ENCODE measurements at regions of chr1 and their contacts with region 1.

Region 1: DNA sequence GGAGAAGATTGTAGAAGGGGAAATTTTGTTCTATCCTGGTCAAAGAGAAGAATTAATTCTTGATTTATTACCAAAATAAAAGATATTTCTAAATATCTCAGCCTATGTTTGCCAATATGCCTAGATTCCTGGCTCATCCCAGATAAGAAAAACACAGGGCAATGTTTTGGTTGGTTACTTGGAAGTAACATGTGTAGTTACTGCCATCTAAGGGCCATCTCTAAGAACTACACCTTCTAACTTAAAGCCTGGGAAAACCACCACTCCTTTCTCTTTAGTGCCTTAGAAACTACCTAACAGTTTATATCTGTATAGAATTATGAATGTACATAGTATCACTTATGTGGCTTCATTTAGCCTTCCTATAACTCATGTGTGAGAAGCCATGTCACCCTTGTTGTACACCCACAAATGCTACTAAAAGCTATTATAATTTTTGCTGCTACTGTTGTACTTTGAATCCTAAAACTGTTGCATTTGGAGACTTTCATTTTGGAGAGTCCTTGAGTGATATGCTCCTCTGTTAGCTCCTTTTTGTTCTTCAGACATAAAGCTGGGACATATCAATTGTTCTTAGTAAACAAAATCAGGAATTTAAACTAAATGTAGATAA is 4.5 kb downstream of the AIM2 start:
- DNase-seq: no peak
- ATAC-seq: peak; percentile 1; the same call in 2 of the 3 replicates
- H3K4me3 ChIP-seq: peak overlapping the region; percentile 13; the same call in 1 of the 2 replicates
- H3K27ac ChIP-seq: peak overlapping the region; percentile 20; the same call in 1 of the 2 replicates
- H3K4me1 ChIP-seq: peaks cover 35% of the 10 kb centered on the region
- H3K27me3 ChIP-seq: no peaks in the 10 kb centered on the region
- CTCF ChIP-seq: peak; percentile 61 to 78 (median 62)
- EP300 ChIP-seq: no peak
- POLR2A ChIP-seq: no peak
- RAD21 ChIP-seq: peak; percentile 74

Region 2: GRCh38 chr1:158285756-158286241 is 786.3 kb before region 1 on chr1:
- CTCF ChIA-PET with region 1: interaction called, 4 read pairs
- POLR2A ChIA-PET with region 1: interaction called, 3 read pairs
- RAD21 ChIA-PET with region 1: interaction called, 5 read pairs
- SMC1A ChIA-PET with region 1: interaction called, 4 read pairs
- in situ Hi-C with region 1: loop called (anchors 10 kb)
- intact Hi-C with region 1: loop called (anchors 2 kb)
- DNase-seq: peak; percentile 79
- ATAC-seq: peak; percentile 75
- H3K4me3 ChIP-seq: no peak overlapping the region
- H3K27ac ChIP-seq: peak overlapping the region; percentile 88
- H3K4me1 ChIP-seq: peaks cover 57% of the 10 kb centered on the region
- H3K27me3 ChIP-seq: no peaks in the 10 kb centered on the region
- CTCF ChIP-seq: no peak
- EP300 ChIP-seq: peak; percentile 51 to 60; a peak in 1 of 4 replicates
- POLR2A ChIP-seq: peak; percentile 31; the same call in 1 of the 2 replicates
- RAD21 ChIP-seq: no peak

Region 3: GRCh38 chr1:158781104-158781503 is 291.0 kb before region 1 on chr1 and contains the start of gene OR6N2:
- CTCF ChIA-PET with region 1: no interaction called
- POLR2A ChIA-PET with region 1: no interaction called
- RAD21 ChIA-PET with region 1: no interaction called
- SMC1A ChIA-PET with region 1: no interaction called
- in situ Hi-C with region 1: no loop called
- intact Hi-C with region 1: no loop called
- DNase-seq: no peak
- ATAC-seq: no peak
- H3K4me3 ChIP-seq: no peak within 1 kb of the TSS
- H3K27ac ChIP-seq: no peak within 1 kb of the TSS
- H3K4me1 ChIP-seq: no peaks in the 10 kb centered on the region
- H3K27me3 ChIP-seq: no peaks in the 10 kb centered on the region
- CTCF ChIP-seq: no peak
- EP300 ChIP-seq: no peak
- POLR2A ChIP-seq: no peak
- RAD21 ChIP-seq: no peak
- polyA plus RNA-seq, gene OR6N2: not detected

Region 4: DNA sequence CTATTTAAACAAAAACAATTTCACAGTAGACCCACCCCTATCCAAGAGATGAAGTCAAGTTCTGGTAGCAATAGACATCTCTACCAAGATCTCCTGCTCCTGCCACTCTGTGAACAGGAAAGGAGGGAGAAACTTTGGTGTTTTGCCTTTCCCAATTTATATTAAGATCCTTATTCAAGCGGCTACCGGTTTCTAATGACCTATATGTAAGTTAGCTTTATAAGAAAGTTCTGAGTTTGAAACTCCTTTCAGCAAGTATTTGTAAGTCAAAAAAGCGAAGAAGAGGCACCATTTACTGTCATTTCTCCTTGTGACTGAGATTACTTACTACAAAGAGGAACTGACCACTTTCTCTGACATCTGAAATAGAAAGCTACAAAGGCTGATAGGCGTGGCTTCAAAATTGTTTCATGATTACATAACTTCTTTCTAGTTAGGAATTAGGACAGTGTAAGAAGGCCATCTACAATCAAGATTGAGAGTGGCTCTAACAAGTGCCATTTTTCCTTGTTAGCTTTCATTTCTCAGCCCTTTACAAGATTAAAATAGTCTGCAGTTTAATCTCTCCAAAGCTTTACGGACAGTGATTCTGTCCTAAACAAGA is 241.1 kb before region 1 on chr1 and contains the start of gene MNDA:
- CTCF ChIA-PET with region 1: interaction called, 6 read pairs
- POLR2A ChIA-PET with region 1: interaction called, 7 read pairs
- RAD21 ChIA-PET with region 1: interaction called, 26 read pairs
- SMC1A ChIA-PET with region 1: interaction called, 28 read pairs
- in situ Hi-C with region 1: loop called (anchors 5 kb)
- intact Hi-C with region 1: loop called (anchors 2 kb)
- DNase-seq: peak; percentile 82
- ATAC-seq: peak; percentile 90
- H3K4me3 ChIP-seq: peak within 1 kb of the TSS; percentile 68
- H3K27ac ChIP-seq: peak within 1 kb of the TSS; percentile 97
- H3K4me1 ChIP-seq: peaks cover 9% of the 10 kb centered on the region; the same call in 1 of the 2 replicates
- H3K27me3 ChIP-seq: no peaks in the 10 kb centered on the region
- CTCF ChIP-seq: no peak
- EP300 ChIP-seq: peak; percentile 53 to 61; a peak in 1 of 4 replicates
- POLR2A ChIP-seq: peak; percentile 41; the same call in 1 of the 2 replicates
- RAD21 ChIP-seq: no peak
- polyA plus RNA-seq, gene MNDA: 81.9 to 91.8 TPM

Region 5: DNA sequence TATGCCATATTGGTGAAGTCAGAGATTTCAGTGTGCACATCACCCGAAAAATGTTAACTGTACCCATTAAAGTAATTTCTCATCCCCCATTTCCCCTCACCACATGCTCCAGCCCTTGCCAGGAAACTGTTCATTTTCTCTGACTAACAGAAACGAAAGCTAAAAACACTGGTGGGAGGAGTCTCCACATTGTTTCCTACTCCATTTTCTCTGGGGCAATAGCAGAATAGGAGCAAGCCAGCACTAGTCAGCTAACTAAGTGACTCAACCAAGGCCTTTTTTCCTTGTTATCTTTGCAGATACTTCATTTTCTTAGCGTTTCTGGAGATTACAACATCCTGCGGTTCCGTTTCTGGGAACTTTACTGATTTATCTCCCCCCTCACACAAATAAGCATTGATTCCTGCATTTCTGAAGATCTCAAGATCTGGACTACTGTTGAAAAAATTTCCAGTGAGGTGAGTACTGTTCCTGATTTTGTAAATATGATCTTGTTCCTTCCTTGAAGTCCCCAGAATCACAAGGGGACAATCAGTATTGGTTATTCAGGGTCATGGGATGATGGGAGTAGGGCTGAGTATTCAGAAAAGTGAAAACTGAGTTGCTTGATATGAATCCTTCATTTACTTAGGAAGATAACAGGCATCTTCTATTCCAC is 62.2 kb before region 1 on chr1 and contains the start of gene IFI16:
- CTCF ChIA-PET with region 1: interaction called, 37 read pairs
- POLR2A ChIA-PET with region 1: interaction called, 46 read pairs
- RAD21 ChIA-PET with region 1: interaction called, 39 read pairs
- SMC1A ChIA-PET with region 1: interaction called, 32 read pairs
- in situ Hi-C with region 1: no loop called
- intact Hi-C with region 1: loop called (anchors 1 kb)
- DNase-seq: peak; percentile 87
- ATAC-seq: peak; percentile 73
- H3K4me3 ChIP-seq: peak within 1 kb of the TSS; percentile 91
- H3K27ac ChIP-seq: peak within 1 kb of the TSS; percentile 100
- H3K4me1 ChIP-seq: peaks cover 15% of the 10 kb centered on the region; the same call in 1 of the 2 replicates
- H3K27me3 ChIP-seq: no peaks in the 10 kb centered on the region
- CTCF ChIP-seq: no peak
- EP300 ChIP-seq: peak; percentile 25 to 37; a peak in 1 of 4 replicates
- POLR2A ChIP-seq: peak; percentile 80
- RAD21 ChIP-seq: no peak
- polyA plus RNA-seq, gene IFI16: 191 to 255 TPM

Region 6: DNA sequence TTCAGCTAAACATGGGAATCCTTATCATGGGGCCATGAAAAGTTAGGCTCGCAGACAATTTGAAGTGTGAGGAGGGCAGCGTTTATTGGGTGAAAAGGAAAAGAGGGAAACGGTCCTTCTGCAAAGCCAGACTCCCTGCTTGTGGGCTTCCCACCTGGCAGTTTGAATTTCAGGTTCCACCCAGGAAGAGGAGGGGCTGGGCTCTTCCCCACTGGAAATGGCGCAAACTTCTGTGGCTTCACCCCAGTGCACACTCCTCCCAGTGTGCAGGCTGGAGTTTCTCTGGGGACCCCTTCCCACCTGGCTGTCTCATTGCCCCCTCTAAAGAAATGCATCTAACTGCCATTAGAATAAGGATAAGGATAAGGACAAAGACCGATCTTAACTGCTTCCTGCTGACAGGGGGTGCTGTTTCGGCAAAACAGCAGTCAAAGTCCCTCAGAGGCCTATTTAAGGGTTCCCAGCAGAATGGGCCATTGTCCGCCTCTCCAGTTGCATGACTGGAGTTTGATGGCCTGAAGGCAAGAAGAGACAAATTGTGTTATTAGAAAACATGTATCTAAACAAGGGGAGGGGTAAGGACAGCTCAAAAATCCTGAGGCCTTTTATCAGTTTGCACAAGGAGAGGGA is 15.9 kb before region 1 on chr1:
- CTCF ChIA-PET with region 1: interaction called, 51 read pairs
- POLR2A ChIA-PET with region 1: interaction called, 4 read pairs
- RAD21 ChIA-PET with region 1: interaction called, 4 read pairs
- SMC1A ChIA-PET with region 1: interaction called, 50 read pairs
- in situ Hi-C with region 1: no loop called
- intact Hi-C with region 1: no loop called
- DNase-seq: no peak
- ATAC-seq: peak; percentile 53
- H3K4me3 ChIP-seq: no peak overlapping the region
- H3K27ac ChIP-seq: no peak overlapping the region
- H3K4me1 ChIP-seq: no peaks in the 10 kb centered on the region
- H3K27me3 ChIP-seq: no peaks in the 10 kb centered on the region
- CTCF ChIP-seq: peak in 2 of 3 experiments; percentile 22 to 29; a peak in 1 of 6 replicates
- EP300 ChIP-seq: no peak
- POLR2A ChIP-seq: 0 out of 2 replicates have a peak, but pooled peaks have one; percentile 18
- RAD21 ChIP-seq: no peak

Region 7: GRCh38 chr1:159122005-159122621 is 50.0 kb after region 1 on chr1:
- CTCF ChIA-PET with region 1: no interaction called
- POLR2A ChIA-PET with region 1: no interaction called
- RAD21 ChIA-PET with region 1: no interaction called
- SMC1A ChIA-PET with region 1: no interaction called
- in situ Hi-C with region 1: no loop called
- intact Hi-C with region 1: no loop called
- DNase-seq: peak; percentile 19
- ATAC-seq: peak; percentile 87
- H3K4me3 ChIP-seq: no peak overlapping the region
- H3K27ac ChIP-seq: no peak overlapping the region
- H3K4me1 ChIP-seq: peaks cover 9% of the 10 kb centered on the region
- H3K27me3 ChIP-seq: peaks cover 2 to 11% of the 10 kb centered on the region in 2 experiments; a peak in 3 of 4 replicates
- CTCF ChIP-seq: no peak
- EP300 ChIP-seq: peak; percentile 79 to 82; a peak in 3 of 4 replicates
- POLR2A ChIP-seq: no peak
- RAD21 ChIP-seq: no peak

Region 8: GRCh38 chr1:159188375-159188788 is 116.3 kb after region 1 on chr1:
- CTCF ChIA-PET with region 1: no interaction called
- POLR2A ChIA-PET with region 1: no interaction called
- RAD21 ChIA-PET with region 1: no interaction called
- SMC1A ChIA-PET with region 1: no interaction called
- in situ Hi-C with region 1: no loop called
- intact Hi-C with region 1: no loop called
- DNase-seq: no peak
- ATAC-seq: peak; percentile 91
- H3K4me3 ChIP-seq: no peak overlapping the region
- H3K27ac ChIP-seq: no peak overlapping the region
- H3K4me1 ChIP-seq: no peaks in the 10 kb centered on the region
- H3K27me3 ChIP-seq: peaks cover 4 to 6% of the 10 kb centered on the region in 2 experiments; a peak in 2 of 4 replicates
- CTCF ChIP-seq: no peak
- EP300 ChIP-seq: no peak
- POLR2A ChIP-seq: no peak
- RAD21 ChIP-seq: no peak